ENCODE measurements at regions of chr5 and their contacts with region 1.

Region 1: GRCh38 chr5:89343666-89344065 is 460.7 kb upstream of the MEF2C start:
- DNase-seq: peak; percentile 74
- ATAC-seq: peak; percentile 79
- H3K4me3 ChIP-seq: peak overlapping the region in 1 of 5 experiments; percentile 23
- H3K4me3 Mint-ChIP-seq: peak overlapping the region; percentile 70
- H3K27ac ChIP-seq: peak overlapping the region; percentile 59 to 82
- H3K27ac Mint-ChIP-seq: peak overlapping the region; percentile 69
- H3K4me1 ChIP-seq: peaks cover 26 to 44% of the 10 kb centered on the region in 2 donors
- H3K4me1 Mint-ChIP-seq: peaks cover 47% of the 10 kb centered on the region
- H3K27me3 ChIP-seq: no peaks in the 10 kb centered on the region
- H3K27me3 Mint-ChIP-seq: no peaks in the 10 kb centered on the region
- CTCF ChIP-seq: no peak

Region 2: DNA sequence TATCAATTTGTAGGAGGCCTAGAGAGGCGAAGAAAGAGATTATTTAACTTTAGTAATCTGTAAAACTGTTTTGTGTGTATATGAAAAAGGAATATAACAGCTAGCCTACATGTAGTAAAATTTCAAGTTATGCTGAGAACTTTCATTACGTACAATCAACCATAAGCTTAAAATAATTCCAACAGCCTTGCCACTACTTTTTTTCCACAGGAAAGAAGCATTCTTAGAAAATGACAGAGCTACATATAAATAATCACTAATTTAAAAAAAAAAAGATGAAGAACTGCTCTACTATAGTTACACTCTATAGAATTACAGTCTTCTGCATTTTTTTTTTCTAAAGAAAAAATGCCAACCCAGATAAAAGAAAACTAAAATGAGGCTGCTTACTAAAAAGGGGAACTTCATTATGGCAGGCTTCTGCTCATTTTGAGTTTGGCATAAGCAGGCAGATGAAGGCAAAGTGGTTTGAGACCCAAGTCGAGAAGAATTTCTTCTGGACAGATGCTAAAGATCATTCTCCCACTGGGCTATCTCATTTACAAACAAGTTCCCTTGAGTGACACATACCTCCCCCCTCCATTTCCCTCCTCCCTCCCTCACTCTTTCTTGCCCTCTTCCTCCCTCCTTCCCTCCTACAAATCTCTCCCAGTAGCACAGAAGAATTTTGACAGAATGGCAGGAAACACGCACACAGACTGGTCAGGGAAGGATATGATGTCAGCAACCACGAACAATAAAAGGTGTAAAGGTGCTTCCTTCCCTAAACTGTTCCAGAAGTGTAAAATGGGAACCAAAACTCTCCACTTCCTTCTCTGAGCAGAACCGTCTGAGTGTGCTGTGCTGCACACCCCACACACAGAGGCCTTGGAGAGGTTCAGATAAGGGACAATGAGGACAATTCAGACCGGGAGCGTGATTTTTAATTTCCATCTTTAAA is 516.8 kb before region 1 on chr5:
- CTCF ChIA-PET with region 1: no interaction called
- POLR2A ChIA-PET with region 1: no interaction called
- intact Hi-C with region 1: loop called (anchors 2 kb)
- DNase-seq: peak; percentile 96
- ATAC-seq: peak; percentile 79
- H3K4me3 ChIP-seq: peak overlapping the region; percentile 3 to 61 (median 35)
- H3K4me3 Mint-ChIP-seq: peak overlapping the region; percentile 78
- H3K27ac ChIP-seq: peak overlapping the region; percentile 92 to 94
- H3K27ac Mint-ChIP-seq: peak overlapping the region; percentile 94
- H3K4me1 ChIP-seq: peaks cover 74 to 94% of the 10 kb centered on the region in 2 donors
- H3K4me1 Mint-ChIP-seq: peaks cover 83% of the 10 kb centered on the region
- H3K27me3 ChIP-seq: no peaks in the 10 kb centered on the region
- H3K27me3 Mint-ChIP-seq: no peaks in the 10 kb centered on the region
- CTCF ChIP-seq: no peak

Region 3: GRCh38 chr5:89204756-89205155 is 138.9 kb before region 1 on chr5:
- CTCF ChIA-PET with region 1: no interaction called
- POLR2A ChIA-PET with region 1: no interaction called
- intact Hi-C with region 1: no loop called
- DNase-seq: no peak
- ATAC-seq: no peak
- H3K4me3 ChIP-seq: no peak overlapping the region
- H3K4me3 Mint-ChIP-seq: no peak overlapping the region
- H3K27ac ChIP-seq: no peak overlapping the region
- H3K27ac Mint-ChIP-seq: no peak overlapping the region
- H3K4me1 ChIP-seq: no peaks in the 10 kb centered on the region
- H3K4me1 Mint-ChIP-seq: no peaks in the 10 kb centered on the region
- H3K27me3 ChIP-seq: no peaks in the 10 kb centered on the region
- H3K27me3 Mint-ChIP-seq: no peaks in the 10 kb centered on the region
- CTCF ChIP-seq: no peak

Region 4: DNA sequence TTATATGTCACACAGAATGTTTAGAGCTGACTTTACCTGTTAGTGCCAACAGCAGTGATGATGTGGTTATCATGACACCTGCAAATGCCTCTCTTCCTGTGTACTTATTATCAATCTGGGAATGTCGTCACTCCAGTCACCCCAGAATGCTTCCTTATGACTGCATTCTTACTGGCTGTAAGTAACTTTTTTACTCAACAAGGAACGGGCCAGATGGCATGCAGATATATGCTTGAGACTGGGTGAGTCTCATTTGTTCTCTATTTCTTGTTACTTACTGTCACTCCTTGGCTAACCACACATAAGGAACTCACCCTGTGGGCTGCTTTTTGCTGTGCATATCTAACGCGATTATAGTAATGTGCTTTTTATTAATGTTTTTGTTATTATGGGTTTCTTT is 75.2 kb before region 1 on chr5:
- CTCF ChIA-PET with region 1: interaction called, 10 read pairs
- POLR2A ChIA-PET with region 1: no interaction called
- intact Hi-C with region 1: loop called (anchors 5 kb)
- DNase-seq: peak; percentile 62
- ATAC-seq: peak; percentile 45
- H3K4me3 ChIP-seq: peak overlapping the region in 1 of 5 experiments; percentile 6
- H3K4me3 Mint-ChIP-seq: peak overlapping the region; percentile 51
- H3K27ac ChIP-seq: peak overlapping the region; percentile 74 to 85
- H3K27ac Mint-ChIP-seq: peak overlapping the region; percentile 82
- H3K4me1 ChIP-seq: peaks cover 71 to 75% of the 10 kb centered on the region in 2 donors
- H3K4me1 Mint-ChIP-seq: peaks cover 71% of the 10 kb centered on the region
- H3K27me3 ChIP-seq: no peaks in the 10 kb centered on the region
- H3K27me3 Mint-ChIP-seq: no peaks in the 10 kb centered on the region
- CTCF ChIP-seq: no peak

Region 5: GRCh38 chr5:89313804-89314588 is 29.7 kb before region 1 on chr5:
- CTCF ChIA-PET with region 1: interaction called, 5 read pairs
- POLR2A ChIA-PET with region 1: interaction called, 3 read pairs
- intact Hi-C with region 1: loop called (anchors 2 kb)
- DNase-seq: peak; percentile 73
- ATAC-seq: peak; percentile 95
- H3K4me3 ChIP-seq: no peak overlapping the region
- H3K4me3 Mint-ChIP-seq: peak overlapping the region; percentile 44
- H3K27ac ChIP-seq: peak overlapping the region; percentile 77 to 94
- H3K27ac Mint-ChIP-seq: peak overlapping the region; percentile 85
- H3K4me1 ChIP-seq: peaks cover 32% of the 10 kb centered on the region in 2 donors
- H3K4me1 Mint-ChIP-seq: peaks cover 44% of the 10 kb centered on the region
- H3K27me3 ChIP-seq: no peaks in the 10 kb centered on the region
- H3K27me3 Mint-ChIP-seq: no peaks in the 10 kb centered on the region
- CTCF ChIP-seq: no peak

Region 6: DNA sequence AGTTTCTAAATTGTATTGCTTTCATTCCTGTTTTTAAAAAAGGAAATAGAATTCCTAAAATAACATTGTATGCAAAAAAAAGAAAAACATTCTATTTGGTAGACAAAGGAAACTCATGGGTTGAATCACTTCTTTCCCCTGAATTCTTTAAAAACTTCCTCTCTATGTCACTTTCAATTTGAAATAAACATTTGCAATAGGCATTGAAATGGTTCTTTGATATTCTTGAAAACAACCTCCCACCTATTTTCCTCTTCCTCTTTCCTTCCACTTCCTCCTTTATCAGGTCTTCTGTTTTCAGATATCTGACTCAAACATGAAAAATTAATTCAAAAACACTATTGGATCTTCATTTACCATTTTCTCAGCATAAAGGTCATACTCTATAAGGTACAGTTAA is 18.7 kb before region 1 on chr5:
- CTCF ChIA-PET with region 1: no interaction called
- POLR2A ChIA-PET with region 1: no interaction called
- intact Hi-C with region 1: loop called (anchors 2 kb)
- DNase-seq: peak; percentile 20
- ATAC-seq: peak; percentile 45
- H3K4me3 ChIP-seq: peak overlapping the region in 1 of 5 experiments; percentile 26
- H3K4me3 Mint-ChIP-seq: peak overlapping the region; percentile 26
- H3K27ac ChIP-seq: peak overlapping the region; percentile 35 to 68
- H3K27ac Mint-ChIP-seq: peak overlapping the region; percentile 46
- H3K4me1 ChIP-seq: peaks cover 15 to 22% of the 10 kb centered on the region in 2 donors
- H3K4me1 Mint-ChIP-seq: peaks cover 36% of the 10 kb centered on the region
- H3K27me3 ChIP-seq: no peaks in the 10 kb centered on the region
- H3K27me3 Mint-ChIP-seq: no peaks in the 10 kb centered on the region
- CTCF ChIP-seq: no peak

Region 7: DNA sequence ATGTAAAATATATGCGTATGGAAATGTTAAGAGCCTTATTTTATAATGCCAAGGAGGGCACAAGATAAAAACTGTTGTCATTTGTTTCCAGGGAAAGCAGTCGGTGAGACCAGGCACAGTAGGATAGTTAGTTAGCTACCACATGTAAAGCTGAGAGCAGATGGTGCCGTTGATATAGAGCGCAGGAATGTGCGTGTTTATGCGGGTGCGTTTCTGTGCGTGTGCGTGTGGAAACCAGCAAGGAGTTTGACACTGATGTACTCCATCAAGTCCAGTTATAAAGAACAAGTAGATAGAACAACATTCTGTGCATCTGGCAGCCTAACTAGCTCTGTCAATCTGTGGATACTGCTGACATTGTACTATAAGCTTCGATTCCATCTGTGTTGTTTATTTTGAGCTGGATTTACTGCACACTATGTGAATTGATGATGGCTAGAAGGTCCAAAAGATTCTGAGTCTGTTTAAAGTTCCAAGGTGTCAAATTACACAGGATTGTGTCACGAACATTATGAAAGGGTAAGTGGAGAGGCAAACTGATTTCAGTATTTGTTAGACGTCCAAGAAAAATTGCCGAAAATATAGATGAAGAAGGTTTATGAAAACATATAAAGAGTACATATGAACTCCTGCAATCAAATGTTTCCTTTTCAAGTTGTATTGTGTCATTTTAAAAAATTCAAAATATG is 34.2 kb after region 1 on chr5:
- CTCF ChIA-PET with region 1: no interaction called
- POLR2A ChIA-PET with region 1: no interaction called
- intact Hi-C with region 1: loop called (anchors 5 kb)
- DNase-seq: no peak
- ATAC-seq: no peak
- H3K4me3 ChIP-seq: no peak overlapping the region
- H3K4me3 Mint-ChIP-seq: no peak overlapping the region
- H3K27ac ChIP-seq: no peak overlapping the region
- H3K27ac Mint-ChIP-seq: no peak overlapping the region
- H3K4me1 ChIP-seq: peaks cover 0 to 15% of the 10 kb centered on the region in 2 donors
- H3K4me1 Mint-ChIP-seq: peaks cover 18% of the 10 kb centered on the region
- H3K27me3 ChIP-seq: no peaks in the 10 kb centered on the region
- H3K27me3 Mint-ChIP-seq: no peaks in the 10 kb centered on the region
- CTCF ChIP-seq: no peak

Region 8: GRCh38 chr5:89435347-89435746 is 91.7 kb after region 1 on chr5:
- CTCF ChIA-PET with region 1: interaction called, 3 read pairs
- POLR2A ChIA-PET with region 1: no interaction called
- intact Hi-C with region 1: loop called (anchors 5 kb)
- DNase-seq: peak; percentile 77
- ATAC-seq: peak; percentile 78
- H3K4me3 ChIP-seq: peak overlapping the region in 4 of 5 experiments; percentile 1 to 45 (median 8)
- H3K4me3 Mint-ChIP-seq: peak overlapping the region; percentile 66
- H3K27ac ChIP-seq: peak overlapping the region; percentile 81 to 89
- H3K27ac Mint-ChIP-seq: peak overlapping the region; percentile 86
- H3K4me1 ChIP-seq: peaks cover 53 to 71% of the 10 kb centered on the region in 2 donors
- H3K4me1 Mint-ChIP-seq: peaks cover 59% of the 10 kb centered on the region
- H3K27me3 ChIP-seq: no peaks in the 10 kb centered on the region
- H3K27me3 Mint-ChIP-seq: no peaks in the 10 kb centered on the region
- CTCF ChIP-seq: no peak